ENCODE measurements at regions of chr4 and their contacts with region 1.

Region 1: GRCh38 chr4:18934197-18934596 is 912.6 kb upstream of the LCORL start:
- DNase-seq: no peak
- H3K4me3 ChIP-seq: no peak overlapping the region
- H3K27ac ChIP-seq: no peak overlapping the region
- H3K4me1 ChIP-seq: no peaks in the 10 kb centered on the region
- H3K27me3 ChIP-seq: no peaks in the 10 kb centered on the region
- CTCF ChIP-seq: no peak

Region 2: DNA sequence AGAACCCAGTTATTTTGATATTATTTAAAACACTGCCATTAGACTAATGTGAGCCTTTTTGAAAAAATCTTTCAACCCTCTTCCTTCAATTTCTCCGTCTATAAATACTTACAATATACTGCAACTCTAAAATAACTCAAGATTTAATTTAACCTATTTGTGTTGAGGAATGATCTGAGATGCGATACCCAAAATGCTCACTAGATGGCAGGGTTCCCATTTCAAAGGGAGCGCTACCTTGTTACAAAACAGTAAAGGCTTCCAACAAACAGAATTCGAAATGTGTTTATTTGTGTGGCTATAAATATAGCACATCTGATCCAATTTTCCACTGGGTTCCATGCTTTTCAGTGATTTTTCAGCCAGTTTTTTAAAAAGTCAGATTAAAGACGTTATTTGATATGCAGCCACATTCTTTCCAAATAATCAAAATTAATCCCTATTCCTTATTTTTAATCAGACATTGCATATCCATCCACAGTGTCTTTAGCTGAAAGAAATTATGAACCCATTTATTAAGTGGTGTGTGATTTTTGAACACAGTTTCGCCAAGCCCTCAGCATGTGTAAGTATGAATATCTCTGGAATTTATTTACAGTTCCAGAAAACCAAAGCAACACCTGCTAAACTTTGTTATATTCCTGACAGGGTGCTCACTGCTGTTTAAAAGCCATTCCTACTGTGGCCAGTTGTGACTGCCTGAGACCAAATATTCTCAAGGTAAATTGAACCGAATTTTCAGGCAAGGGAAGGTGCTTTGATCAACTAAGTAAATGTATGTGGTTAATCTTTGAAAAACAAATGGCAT is 244.7 kb before region 1 on chr4:
- intact Hi-C with region 1: loop called (anchors 10 kb)
- DNase-seq: peak; percentile 72
- H3K4me3 ChIP-seq: no peak overlapping the region
- H3K27ac ChIP-seq: no peak overlapping the region
- H3K4me1 ChIP-seq: no peaks in the 10 kb centered on the region
- H3K27me3 ChIP-seq: no peaks in the 10 kb centered on the region
- CTCF ChIP-seq: peak; percentile 80

Region 3: GRCh38 chr4:19429684-19430083 is 495.5 kb after region 1 on chr4:
- intact Hi-C with region 1: no loop called
- DNase-seq: no peak
- H3K4me3 ChIP-seq: no peak overlapping the region
- H3K27ac ChIP-seq: no peak overlapping the region
- H3K4me1 ChIP-seq: no peaks in the 10 kb centered on the region
- H3K27me3 ChIP-seq: no peaks in the 10 kb centered on the region
- CTCF ChIP-seq: no peak